ENCODE measurements at regions of chr5 and their contacts with region 1.

Region 1: GRCh38 chr5:133700251-133700650 is 87.9 kb upstream of the FSTL4 start:
- DNase-seq: no peak
- H3K4me3 ChIP-seq: no peak overlapping the region
- H3K4me3 Mint-ChIP-seq: no peak overlapping the region
- H3K27ac Mint-ChIP-seq: no peak overlapping the region
- H3K4me1 ChIP-seq: no peaks in the 10 kb centered on the region
- H3K4me1 Mint-ChIP-seq: no peaks in the 10 kb centered on the region
- H3K27me3 ChIP-seq: no peaks in the 10 kb centered on the region
- H3K27me3 Mint-ChIP-seq: peaks cover 10% of the 10 kb centered on the region
- CTCF ChIP-seq: no peak

Region 2: GRCh38 chr5:133683646-133684596 is 16.3 kb before region 1 on chr5:
- CTCF ChIA-PET with region 1: no interaction called
- POLR2A ChIA-PET with region 1: no interaction called
- intact Hi-C with region 1: loop called (anchors 1 kb)
- DNase-seq: no peak
- H3K4me3 ChIP-seq: no peak overlapping the region
- H3K4me3 Mint-ChIP-seq: no peak overlapping the region
- H3K27ac Mint-ChIP-seq: no peak overlapping the region
- H3K4me1 ChIP-seq: no peaks in the 10 kb centered on the region
- H3K4me1 Mint-ChIP-seq: no peaks in the 10 kb centered on the region
- H3K27me3 ChIP-seq: peaks cover 1% of the 10 kb centered on the region
- H3K27me3 Mint-ChIP-seq: peaks cover 18% of the 10 kb centered on the region
- CTCF ChIP-seq: no peak

Measured in Caco-2 (cell line).